Aorta (tissue), 5 donors: ENCODE measurements at regions of chr4 and their contacts with region 1.

Region 1: DNA sequence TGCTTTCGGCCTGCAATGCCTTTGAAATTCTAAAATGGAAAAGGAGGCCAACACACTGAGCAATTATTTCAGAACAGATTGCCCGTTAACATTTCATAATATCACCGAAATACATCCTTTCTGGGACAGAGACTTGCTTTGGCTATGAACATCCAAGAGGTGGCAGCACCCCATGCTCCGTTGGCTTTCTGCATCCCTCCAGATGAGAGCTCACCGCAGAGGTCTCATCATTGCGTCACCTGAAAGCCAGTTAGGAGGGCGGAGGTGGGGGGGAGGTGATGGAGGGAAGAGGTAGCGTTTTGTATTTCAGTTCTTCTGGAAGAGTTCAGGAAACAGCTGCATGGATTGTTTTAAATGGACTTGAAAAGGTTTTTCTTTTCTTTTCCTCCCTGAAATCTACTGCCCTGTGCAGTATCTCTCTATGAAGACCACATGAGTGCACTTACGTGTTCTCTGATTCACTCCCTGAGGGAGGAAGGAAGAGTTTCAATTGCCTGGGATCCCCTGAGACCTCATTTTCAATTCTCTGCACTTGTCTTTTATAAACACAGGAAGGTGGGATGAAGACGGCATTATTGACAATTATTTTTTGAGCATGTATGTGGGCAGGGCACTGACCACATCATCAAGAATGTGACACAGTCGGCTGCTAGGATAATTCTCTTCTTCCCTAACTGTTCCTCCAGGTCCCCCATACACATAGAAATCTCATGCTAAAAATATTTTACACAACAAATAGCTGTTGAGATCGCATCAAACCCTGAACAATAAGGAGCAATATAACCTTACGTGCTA is 166.9 kb upstream of the PGRMC2 start:
- DNase-seq: peak; percentile 84 to 88
- ATAC-seq: peak; percentile 91
- H3K4me3 ChIP-seq: no peak overlapping the region
- H3K27ac ChIP-seq: no peak overlapping the region
- H3K4me1 ChIP-seq: no peaks in the 10 kb centered on the region
- H3K27me3 ChIP-seq: no peaks in the 10 kb centered on the region

Region 2: DNA sequence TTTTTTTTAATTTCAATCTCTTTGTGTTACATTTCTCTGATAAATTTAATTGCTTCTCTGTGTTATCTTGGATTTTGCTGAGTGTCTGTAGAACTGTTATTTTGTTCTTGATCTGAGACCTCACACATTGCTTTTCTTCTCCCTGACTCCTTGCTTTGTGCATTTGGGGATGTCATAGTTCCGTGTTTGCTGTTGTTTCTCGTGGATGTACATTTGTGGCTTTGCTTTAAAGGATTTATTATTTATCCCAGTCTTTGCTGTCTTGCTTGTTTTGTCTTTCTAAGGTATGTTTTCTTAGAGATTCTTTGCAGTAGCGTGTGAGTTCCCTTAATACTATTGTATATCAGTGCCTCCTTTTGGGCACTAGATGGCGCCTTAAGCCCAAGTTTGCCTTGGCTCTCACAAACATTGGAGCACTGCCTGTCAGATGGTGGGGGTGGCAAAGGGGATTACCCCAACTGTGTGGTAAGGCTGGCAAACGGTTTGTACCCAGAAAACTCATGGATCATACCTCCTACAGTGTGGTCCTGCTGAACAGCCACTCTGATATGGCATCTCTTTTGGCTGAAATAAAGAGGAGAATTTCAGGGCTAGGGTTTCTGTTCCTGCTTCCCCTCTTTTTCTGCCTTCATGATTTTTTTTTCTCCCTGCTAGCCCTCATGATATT is 263.2 kb before region 1 on chr4:
- intact Hi-C with region 1: loop called in 1 of 2 experiments (anchors 10 kb)
- DNase-seq: peak; percentile 69 to 79
- ATAC-seq: peak; percentile 91
- H3K4me3 ChIP-seq: no peak overlapping the region
- H3K27ac ChIP-seq: no peak overlapping the region
- H3K4me1 ChIP-seq: no peaks in the 10 kb centered on the region
- H3K27me3 ChIP-seq: no peaks in the 10 kb centered on the region

Region 3: GRCh38 chr4:128553686-128554515 is 99.4 kb after region 1 on chr4:
- intact Hi-C with region 1: loop called (anchors 5 to 10 kb)
- DNase-seq: no peak
- ATAC-seq: peak; percentile 14
- H3K4me3 ChIP-seq: peak overlapping the region; percentile 45 to 95
- H3K27ac ChIP-seq: no peak overlapping the region
- H3K4me1 ChIP-seq: peaks cover 3 to 4% of the 10 kb centered on the region in 2 donors
- H3K27me3 ChIP-seq: no peaks in the 10 kb centered on the region

Region 4: DNA sequence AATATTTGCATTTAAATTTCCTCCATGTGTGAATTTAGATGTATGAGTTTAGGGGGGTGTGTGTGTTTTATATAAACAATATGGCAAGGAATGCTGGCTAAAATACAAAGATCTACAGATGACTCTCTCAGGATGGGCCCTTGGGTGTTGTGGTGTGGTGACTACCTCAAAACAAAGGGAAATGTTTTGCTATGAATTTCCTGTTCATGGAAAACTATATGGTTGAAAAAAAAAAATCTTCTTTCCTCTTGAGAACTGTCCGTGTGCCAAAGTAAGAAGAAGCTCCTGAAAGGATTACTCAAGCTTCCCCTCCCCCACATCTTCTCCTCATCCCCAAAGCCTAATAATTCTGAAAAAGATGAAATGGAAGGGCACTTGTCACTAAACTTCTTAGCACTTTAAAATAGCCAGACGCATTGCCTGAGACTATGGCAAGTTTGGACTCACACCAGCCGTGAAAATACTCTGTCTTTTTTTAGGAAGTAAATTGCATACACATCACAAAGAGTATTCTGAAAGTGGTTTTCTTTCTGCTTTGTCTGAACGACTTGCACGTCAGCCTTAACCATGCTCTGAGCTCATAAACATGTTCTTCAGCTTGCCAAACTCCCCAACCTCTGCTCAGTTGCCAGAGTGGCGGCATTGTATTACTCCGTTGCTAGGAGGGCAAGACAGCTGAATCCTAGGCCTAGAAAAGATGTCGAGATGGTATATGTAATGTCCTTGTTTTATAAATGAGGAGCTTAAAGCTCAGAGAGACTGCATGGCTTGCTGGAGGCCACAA is 104.6 kb after region 1 on chr4:
- intact Hi-C with region 1: loop called (anchors 5 to 10 kb)
- DNase-seq: peak in 1 of 2 donors; percentile 55
- ATAC-seq: peak; percentile 11
- H3K4me3 ChIP-seq: no peak overlapping the region
- H3K27ac ChIP-seq: peak overlapping the region; percentile 55 to 83
- H3K4me1 ChIP-seq: peaks cover 5% of the 10 kb centered on the region in 2 donors
- H3K27me3 ChIP-seq: no peaks in the 10 kb centered on the region

Region 5: GRCh38 chr4:128809477-128810330 is 355.2 kb after region 1 on chr4 and contains the start of gene JADE1:
- intact Hi-C with region 1: loop called (anchors 1 to 5 kb)
- DNase-seq: peak; percentile 93 to 94
- ATAC-seq: peak; percentile 87
- H3K4me3 ChIP-seq: peak within 1 kb of the TSS; percentile 64 to 72
- H3K27ac ChIP-seq: peak within 1 kb of the TSS; percentile 84 to 90
- H3K4me1 ChIP-seq: no peaks in the 10 kb centered on the region
- H3K27me3 ChIP-seq: no peaks in the 10 kb centered on the region
- total RNA-seq, gene JADE1: 32.2 to 32.8 TPM

Region 6: GRCh38 chr4:128863312-128864075 is 409.0 kb after region 1 on chr4:
- intact Hi-C with region 1: loop called (anchors 5 kb)
- DNase-seq: peak; percentile 85 to 91
- ATAC-seq: peak; percentile 87
- H3K4me3 ChIP-seq: no peak overlapping the region
- H3K27ac ChIP-seq: peak overlapping the region in 1 of 2 donors; percentile 29
- H3K4me1 ChIP-seq: no peaks in the 10 kb centered on the region
- H3K27me3 ChIP-seq: no peaks in the 10 kb centered on the region